ENCODE measurements at regions of chr13 and their contacts with region 1.

Region 1: DNA sequence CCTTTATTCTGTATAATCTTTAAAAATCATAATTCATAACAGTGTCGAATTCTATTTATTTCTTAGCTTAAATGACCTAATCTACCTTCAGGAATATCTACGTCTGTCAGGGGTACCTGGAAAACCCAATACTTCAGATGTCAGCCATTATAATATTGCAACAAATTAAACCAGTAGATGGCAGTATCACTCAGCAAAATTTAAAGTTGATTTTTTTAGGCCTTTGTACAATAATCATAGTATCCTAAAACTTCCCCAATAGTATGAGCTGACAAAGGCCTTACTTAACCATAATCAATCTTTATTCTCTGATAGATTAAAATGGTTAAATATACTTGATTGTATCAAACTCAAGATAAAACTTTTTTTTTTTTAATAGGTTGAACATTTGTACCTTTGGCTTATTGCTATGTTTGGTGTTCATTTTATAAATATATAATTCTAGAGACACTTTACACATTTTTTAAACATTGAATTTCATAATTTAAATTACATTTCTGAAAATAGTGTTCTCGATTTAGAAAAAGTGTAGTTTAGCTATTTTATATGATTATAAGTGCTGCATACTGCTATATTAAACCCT is 830.2 kb upstream of the SPRY2 start:
- DNase-seq: no peak
- ATAC-seq: no peak
- H3K4me3 Mint-ChIP-seq: no peak overlapping the region
- H3K27ac Mint-ChIP-seq: no peak overlapping the region
- H3K4me1 Mint-ChIP-seq: no peaks in the 10 kb centered on the region
- H3K27me3 Mint-ChIP-seq: no peaks in the 10 kb centered on the region
- CTCF ChIP-seq: peak; percentile 60

Region 2: GRCh38 chr13:81184556-81185265 is 13.6 kb after region 1 on chr13:
- CTCF ChIA-PET with region 1: interaction called, 12 read pairs
- POLR2A ChIA-PET with region 1: no interaction called
- intact Hi-C with region 1: no loop called
- DNase-seq: no peak
- ATAC-seq: no peak
- H3K4me3 Mint-ChIP-seq: no peak overlapping the region
- H3K27ac Mint-ChIP-seq: no peak overlapping the region
- H3K4me1 Mint-ChIP-seq: no peaks in the 10 kb centered on the region
- H3K27me3 Mint-ChIP-seq: no peaks in the 10 kb centered on the region
- CTCF ChIP-seq: no peak

Measured in activated CD8-positive, alpha-beta T cell treated with anti-CD3 and anti-CD28 coated beads for 36 hours (primary cell).